Naive thymus-derived CD4-positive, alpha-beta T cell (primary cell): ENCODE measurements at regions of chr4 and their contacts with region 1.

Region 1: DNA sequence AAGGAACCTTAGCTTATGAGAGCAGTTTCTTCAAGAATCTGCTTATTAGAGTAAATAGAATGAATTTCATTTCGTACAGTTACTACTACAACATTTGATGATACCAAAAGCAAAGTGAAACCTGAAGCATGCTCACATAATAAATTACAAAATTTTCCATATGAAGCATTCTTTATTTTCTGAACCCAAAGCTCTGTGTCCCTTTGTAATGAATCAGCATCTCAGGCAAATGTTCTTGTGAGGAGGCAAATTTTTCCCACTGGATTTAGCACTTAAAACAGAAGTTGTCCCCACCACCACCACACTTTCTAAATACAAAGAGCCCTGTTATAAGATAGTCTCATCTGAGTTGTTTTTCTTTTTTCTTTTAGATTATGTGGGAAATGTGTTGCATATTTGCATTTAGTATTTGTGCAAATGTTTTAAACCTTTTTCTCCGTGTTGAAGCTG is 70.7 kb upstream of the NFKB1 start:
- DNase-seq: no peak
- ATAC-seq: no peak
- H3K4me3 ChIP-seq: peak overlapping the region; percentile 72
- H3K4me3 Mint-ChIP-seq: peak overlapping the region; percentile 75 to 92 (median 88)
- H3K27ac ChIP-seq: peak overlapping the region; percentile 67
- H3K27ac Mint-ChIP-seq: peak overlapping the region in 8 of 9 donors; percentile 26 to 92 (median 80)
- H3K4me1 ChIP-seq: no peaks in the 10 kb centered on the region
- H3K4me1 Mint-ChIP-seq: peaks cover 0 to 19% (median 5%) of the 10 kb centered on the region in 7 donors
- H3K27me3 ChIP-seq: no peaks in the 10 kb centered on the region
- H3K27me3 Mint-ChIP-seq: peaks cover 0 to 16% (median 0%) of the 10 kb centered on the region in 5 donors

Region 2: DNA sequence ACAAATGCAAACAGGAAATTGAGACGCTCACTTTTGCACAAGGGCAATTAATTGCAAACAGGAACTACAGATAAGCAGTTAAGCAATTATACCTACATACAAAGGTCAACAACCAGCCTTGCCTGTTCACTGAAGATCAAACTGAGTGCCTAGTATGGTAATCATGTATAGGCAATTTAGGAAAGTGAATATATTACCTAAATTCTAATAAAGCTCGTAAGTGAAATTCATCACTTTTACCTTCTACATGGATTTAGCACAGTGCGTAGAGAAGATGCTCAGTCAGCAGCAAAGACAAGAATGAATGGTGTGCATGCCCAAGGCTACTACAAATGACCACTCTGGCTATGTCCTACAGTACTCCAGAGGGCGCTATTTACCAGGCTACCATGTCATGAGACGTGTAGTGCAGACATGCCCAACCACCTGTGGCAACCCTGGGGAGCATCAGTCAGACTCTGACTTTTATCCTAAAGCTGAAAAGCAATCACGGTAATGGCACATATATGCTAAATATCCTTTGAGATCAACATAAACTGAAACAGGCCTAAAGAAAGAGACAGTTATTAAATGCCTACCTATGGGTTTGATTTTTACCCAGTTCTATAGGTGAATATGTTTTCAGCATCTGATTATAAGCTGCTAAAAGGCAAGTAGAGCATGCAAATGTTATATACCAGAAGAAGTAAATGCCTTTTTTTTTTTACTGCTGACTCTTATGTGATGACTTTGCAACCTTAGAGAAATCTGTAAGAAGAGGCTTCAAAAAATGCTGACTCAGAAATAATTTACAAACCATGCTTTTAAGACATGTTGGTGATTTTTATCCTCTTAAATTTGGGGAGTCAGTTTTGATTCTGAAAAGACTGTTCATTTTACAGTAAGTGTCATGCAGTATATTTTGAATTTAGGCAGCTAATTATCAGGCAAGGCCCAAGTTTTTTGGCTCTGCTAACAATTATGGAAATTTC is 1261.2 kb before region 1 on chr4:
- CTCF ChIA-PET with region 1: no interaction called
- POLR2A ChIA-PET with region 1: no interaction called
- intact Hi-C with region 1: loop called in 1 of 2 experiments (anchors 1 kb)
- DNase-seq: peak; percentile 9 to 64 (median 54)
- ATAC-seq: peak; percentile 96
- H3K4me3 ChIP-seq: no peak overlapping the region
- H3K4me3 Mint-ChIP-seq: no peak overlapping the region
- H3K27ac ChIP-seq: no peak overlapping the region
- H3K27ac Mint-ChIP-seq: no peak overlapping the region
- H3K4me1 ChIP-seq: no peaks in the 10 kb centered on the region
- H3K4me1 Mint-ChIP-seq: peaks cover 0 to 6% (median 3%) of the 10 kb centered on the region in 7 donors
- H3K27me3 ChIP-seq: no peaks in the 10 kb centered on the region
- H3K27me3 Mint-ChIP-seq: no peaks in the 10 kb centered on the region

Region 3: GRCh38 chr4:102047616-102048015 is 382.9 kb before region 1 on chr4:
- CTCF ChIA-PET with region 1: no interaction called
- POLR2A ChIA-PET with region 1: no interaction called
- intact Hi-C with region 1: no loop called
- DNase-seq: no peak
- ATAC-seq: no peak
- H3K4me3 ChIP-seq: no peak overlapping the region
- H3K4me3 Mint-ChIP-seq: no peak overlapping the region
- H3K27ac ChIP-seq: no peak overlapping the region
- H3K27ac Mint-ChIP-seq: no peak overlapping the region
- H3K4me1 ChIP-seq: no peaks in the 10 kb centered on the region
- H3K4me1 Mint-ChIP-seq: peaks cover 0 to 2% (median 2%) of the 10 kb centered on the region in 7 donors
- H3K27me3 ChIP-seq: no peaks in the 10 kb centered on the region
- H3K27me3 Mint-ChIP-seq: peaks cover 0 to 23% (median 9%) of the 10 kb centered on the region in 5 donors

Region 4: DNA sequence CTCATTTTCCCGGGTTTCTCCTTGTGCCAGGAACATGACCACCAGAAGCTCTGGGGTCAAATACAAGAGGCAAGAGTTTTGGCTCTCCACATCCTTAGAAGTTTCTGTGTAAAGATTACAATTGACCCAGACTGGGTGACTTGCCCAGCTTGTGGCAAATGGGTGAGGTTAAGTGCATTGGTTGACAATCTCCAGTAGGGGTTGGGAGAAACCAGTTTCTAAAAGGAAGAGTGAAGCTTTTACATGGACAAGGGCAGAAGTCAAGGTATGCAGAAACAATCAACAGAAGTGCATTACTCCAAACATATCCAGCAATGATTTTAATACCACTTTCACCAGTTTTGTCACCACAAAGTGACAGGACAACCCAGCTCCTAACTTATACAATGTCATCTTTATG is 175.0 kb before region 1 on chr4:
- CTCF ChIA-PET with region 1: no interaction called
- POLR2A ChIA-PET with region 1: no interaction called
- intact Hi-C with region 1: loop called (anchors 1 to 2 kb)
- DNase-seq: no peak
- ATAC-seq: no peak
- H3K4me3 ChIP-seq: no peak overlapping the region
- H3K4me3 Mint-ChIP-seq: no peak overlapping the region
- H3K27ac ChIP-seq: no peak overlapping the region
- H3K27ac Mint-ChIP-seq: no peak overlapping the region
- H3K4me1 ChIP-seq: no peaks in the 10 kb centered on the region
- H3K4me1 Mint-ChIP-seq: peaks cover 0 to 9% (median 0%) of the 10 kb centered on the region in 7 donors
- H3K27me3 ChIP-seq: no peaks in the 10 kb centered on the region
- H3K27me3 Mint-ChIP-seq: no peaks in the 10 kb centered on the region

Region 5: GRCh38 chr4:102285831-102286230 is 144.7 kb before region 1 on chr4:
- CTCF ChIA-PET with region 1: no interaction called
- POLR2A ChIA-PET with region 1: no interaction called
- intact Hi-C with region 1: no loop called
- DNase-seq: no peak
- ATAC-seq: no peak
- H3K4me3 ChIP-seq: no peak overlapping the region
- H3K4me3 Mint-ChIP-seq: no peak overlapping the region
- H3K27ac ChIP-seq: no peak overlapping the region
- H3K27ac Mint-ChIP-seq: no peak overlapping the region
- H3K4me1 ChIP-seq: no peaks in the 10 kb centered on the region
- H3K4me1 Mint-ChIP-seq: peaks cover 0 to 8% (median 0%) of the 10 kb centered on the region in 7 donors
- H3K27me3 ChIP-seq: no peaks in the 10 kb centered on the region
- H3K27me3 Mint-ChIP-seq: no peaks in the 10 kb centered on the region

Region 6: GRCh38 chr4:102483120-102483519 is 52.6 kb after region 1 on chr4:
- CTCF ChIA-PET with region 1: no interaction called
- POLR2A ChIA-PET with region 1: no interaction called
- intact Hi-C with region 1: no loop called
- DNase-seq: no peak
- ATAC-seq: no peak
- H3K4me3 ChIP-seq: no peak overlapping the region
- H3K4me3 Mint-ChIP-seq: no peak overlapping the region
- H3K27ac ChIP-seq: no peak overlapping the region
- H3K27ac Mint-ChIP-seq: no peak overlapping the region
- H3K4me1 ChIP-seq: no peaks in the 10 kb centered on the region
- H3K4me1 Mint-ChIP-seq: peaks cover 0 to 18% (median 9%) of the 10 kb centered on the region in 7 donors
- H3K27me3 ChIP-seq: no peaks in the 10 kb centered on the region
- H3K27me3 Mint-ChIP-seq: peaks cover 0 to 12% (median 0%) of the 10 kb centered on the region in 5 donors

Region 7: GRCh38 chr4:102620697-102621497 is 190.4 kb after region 1 on chr4:
- CTCF ChIA-PET with region 1: interaction called, 4 read pairs
- POLR2A ChIA-PET with region 1: no interaction called
- intact Hi-C with region 1: loop called (anchors 1 kb)
- DNase-seq: peak in 2 of 9 donors; percentile 34 to 45
- ATAC-seq: peak; percentile 65
- H3K4me3 ChIP-seq: no peak overlapping the region
- H3K4me3 Mint-ChIP-seq: peak overlapping the region in 3 of 10 donors; percentile 9 to 42 (median 32)
- H3K27ac ChIP-seq: no peak overlapping the region
- H3K27ac Mint-ChIP-seq: peak overlapping the region in 7 of 9 donors; percentile 20 to 85 (median 59)
- H3K4me1 ChIP-seq: peaks cover 7 to 18% of the 10 kb centered on the region in 2 donors
- H3K4me1 Mint-ChIP-seq: peaks cover 15 to 73% (median 46%) of the 10 kb centered on the region in 7 donors
- H3K27me3 ChIP-seq: no peaks in the 10 kb centered on the region
- H3K27me3 Mint-ChIP-seq: no peaks in the 10 kb centered on the region

Region 8: GRCh38 chr4:103008875-103009729 is 578.6 kb after region 1 on chr4:
- CTCF ChIA-PET with region 1: interaction called, 6 read pairs
- POLR2A ChIA-PET with region 1: no interaction called
- intact Hi-C with region 1: loop called (anchors 1 kb)
- DNase-seq: peak in 7 of 9 donors; percentile 39 to 67 (median 56)
- ATAC-seq: peak; percentile 93
- H3K4me3 ChIP-seq: no peak overlapping the region
- H3K4me3 Mint-ChIP-seq: no peak overlapping the region
- H3K27ac ChIP-seq: no peak overlapping the region
- H3K27ac Mint-ChIP-seq: no peak overlapping the region
- H3K4me1 ChIP-seq: no peaks in the 10 kb centered on the region
- H3K4me1 Mint-ChIP-seq: peaks cover 0 to 3% (median 0%) of the 10 kb centered on the region in 7 donors
- H3K27me3 ChIP-seq: no peaks in the 10 kb centered on the region
- H3K27me3 Mint-ChIP-seq: peaks cover 0 to 14% (median 0%) of the 10 kb centered on the region in 5 donors

Region 9: GRCh38 chr4:103091601-103092223 is 661.2 kb after region 1 on chr4:
- CTCF ChIA-PET with region 1: no interaction called
- POLR2A ChIA-PET with region 1: no interaction called
- intact Hi-C with region 1: loop called in 1 of 2 experiments (anchors 1 kb)
- DNase-seq: peak in 7 of 9 donors; percentile 36 to 65 (median 50)
- ATAC-seq: peak; percentile 80
- H3K4me3 ChIP-seq: no peak overlapping the region
- H3K4me3 Mint-ChIP-seq: peak overlapping the region in 1 of 10 donors; percentile 78
- H3K27ac ChIP-seq: no peak overlapping the region
- H3K27ac Mint-ChIP-seq: peak overlapping the region in 3 of 9 donors; percentile 2 to 72 (median 41)
- H3K4me1 ChIP-seq: no peaks in the 10 kb centered on the region
- H3K4me1 Mint-ChIP-seq: peaks cover 0 to 26% (median 20%) of the 10 kb centered on the region in 7 donors
- H3K27me3 ChIP-seq: no peaks in the 10 kb centered on the region
- H3K27me3 Mint-ChIP-seq: no peaks in the 10 kb centered on the region